Colonic mucosa (tissue), 4 donors: ENCODE measurements at regions of chr18 and their contacts with region 1.

Region 1: DNA sequence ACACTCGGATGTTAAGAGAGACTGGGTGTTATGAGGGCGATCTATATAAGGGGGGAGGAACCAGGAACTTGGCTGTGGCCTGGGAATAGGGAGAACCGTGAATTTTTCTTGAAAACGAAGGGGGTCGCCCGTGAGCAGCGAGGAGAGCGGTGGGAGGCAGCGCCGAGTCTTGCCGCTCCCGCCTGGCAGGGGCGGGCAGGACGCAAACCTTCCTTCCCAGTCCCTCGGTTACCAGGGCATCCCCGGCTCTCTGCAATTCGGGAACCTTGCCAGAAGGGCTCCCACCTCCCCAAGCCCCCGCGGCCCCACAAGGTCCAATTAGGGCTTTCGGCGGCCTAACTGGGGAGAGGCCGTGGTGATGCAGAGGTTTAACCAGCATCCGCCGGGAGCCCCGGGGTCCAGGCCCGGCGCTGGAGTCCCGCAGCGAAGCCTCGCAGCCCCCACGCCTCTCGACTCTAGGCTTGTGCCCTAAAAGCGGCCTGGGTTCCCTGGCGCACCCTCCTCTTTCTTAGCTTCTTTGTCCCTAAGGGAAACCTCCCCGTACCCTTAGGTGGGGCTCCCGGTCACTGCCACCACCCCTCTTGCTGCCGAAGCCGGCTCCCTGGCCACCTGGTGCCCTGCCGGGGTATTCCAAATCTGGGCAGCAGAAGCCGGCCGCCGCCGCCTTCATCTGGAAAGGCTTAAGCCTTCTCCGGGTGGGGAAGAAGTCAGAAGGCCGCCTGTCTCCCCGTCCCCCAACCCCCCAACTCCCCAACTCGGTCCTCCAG is 680 bp upstream of the FHOD3 start:
- DNase-seq: peak; percentile 67
- H3K4me3 ChIP-seq: peak overlapping the region; percentile 62
- H3K27ac ChIP-seq: no peak overlapping the region
- H3K4me1 ChIP-seq: peaks cover 16% of the 10 kb centered on the region
- H3K27me3 ChIP-seq: peaks cover 28% of the 10 kb centered on the region
- CTCF ChIP-seq: no peak

Region 2: GRCh38 chr18:36086186-36086585 is 210.6 kb before region 1 on chr18:
- intact Hi-C with region 1: no loop called
- DNase-seq: no peak
- H3K4me3 ChIP-seq: no peak overlapping the region
- H3K27ac ChIP-seq: no peak overlapping the region
- H3K4me1 ChIP-seq: no peaks in the 10 kb centered on the region
- H3K27me3 ChIP-seq: no peaks in the 10 kb centered on the region
- CTCF ChIP-seq: no peak

Region 3: DNA sequence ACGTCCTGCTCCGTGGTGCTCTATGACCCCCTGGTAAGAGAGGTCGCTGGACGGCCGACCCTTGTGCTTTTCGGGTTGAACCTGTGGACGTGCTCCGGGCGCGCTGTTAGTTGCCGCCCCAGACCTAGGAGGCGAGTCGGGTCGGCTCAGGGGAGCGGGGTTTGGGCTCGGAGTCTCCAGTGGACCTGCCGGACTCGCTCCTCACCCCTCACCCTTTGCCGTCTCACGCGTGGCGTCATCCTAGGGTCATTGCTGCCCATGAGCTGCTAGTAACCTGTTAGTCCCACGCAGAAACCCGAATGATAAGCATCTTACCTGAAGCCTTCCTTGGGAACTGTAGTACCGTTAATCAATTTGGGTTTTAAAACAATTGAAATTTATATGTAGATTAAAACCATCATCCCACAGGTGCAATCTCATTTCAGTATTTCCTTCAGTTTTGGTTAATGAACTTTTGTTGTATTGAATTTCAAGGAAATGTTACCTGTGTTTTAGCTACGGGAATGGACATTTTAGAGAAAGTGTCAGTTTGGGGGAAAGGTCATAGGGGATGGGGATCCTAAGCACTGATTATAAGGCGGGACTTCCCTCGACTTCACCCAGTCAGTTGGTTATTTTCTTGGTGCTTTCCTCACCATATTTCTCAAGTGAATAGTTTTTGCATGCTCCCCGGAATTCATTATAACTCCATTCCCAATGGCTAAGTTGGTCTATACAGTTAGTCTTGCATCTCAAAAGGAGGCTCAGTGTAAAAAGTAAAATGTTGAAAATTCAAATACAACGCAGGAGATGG is 166.6 kb before region 1 on chr18:
- intact Hi-C with region 1: no loop called
- DNase-seq: no peak
- H3K4me3 ChIP-seq: peak overlapping the region; percentile 91
- H3K27ac ChIP-seq: peak overlapping the region; percentile 96
- H3K4me1 ChIP-seq: peaks cover 7% of the 10 kb centered on the region
- H3K27me3 ChIP-seq: no peaks in the 10 kb centered on the region
- CTCF ChIP-seq: no peak

Region 4: GRCh38 chr18:36169938-36170337 is 126.9 kb before region 1 on chr18:
- intact Hi-C with region 1: no loop called
- DNase-seq: no peak
- H3K4me3 ChIP-seq: no peak overlapping the region
- H3K27ac ChIP-seq: no peak overlapping the region
- H3K4me1 ChIP-seq: no peaks in the 10 kb centered on the region
- H3K27me3 ChIP-seq: no peaks in the 10 kb centered on the region
- CTCF ChIP-seq: no peak

Region 5: GRCh38 chr18:36419905-36420531 is 123.2 kb after region 1 on chr18:
- intact Hi-C with region 1: loop called (anchors 10 kb)
- DNase-seq: no peak
- H3K4me3 ChIP-seq: no peak overlapping the region
- H3K27ac ChIP-seq: no peak overlapping the region
- H3K4me1 ChIP-seq: no peaks in the 10 kb centered on the region
- H3K27me3 ChIP-seq: no peaks in the 10 kb centered on the region
- CTCF ChIP-seq: no peak

Region 6: DNA sequence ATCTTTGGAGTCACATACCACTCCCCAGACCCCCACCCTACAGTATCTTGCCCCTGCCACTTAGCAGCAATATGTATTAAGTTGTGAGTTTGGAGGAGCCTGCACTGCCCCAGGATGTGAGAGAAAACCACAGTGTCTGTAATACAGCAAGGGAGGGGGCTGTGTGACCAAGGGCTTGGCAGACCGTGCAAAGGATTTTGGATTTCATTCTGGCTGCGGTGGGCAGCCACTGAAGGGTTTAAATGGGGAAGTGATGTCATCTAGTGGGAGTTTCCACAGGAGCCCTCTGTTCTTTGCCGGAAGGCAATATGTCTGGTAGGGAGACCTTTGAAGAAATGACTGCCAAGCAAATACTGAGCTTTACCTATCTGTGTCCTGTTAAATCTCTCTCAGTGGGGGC is 203.1 kb after region 1 on chr18:
- intact Hi-C with region 1: no loop called
- DNase-seq: no peak
- H3K4me3 ChIP-seq: no peak overlapping the region
- H3K27ac ChIP-seq: no peak overlapping the region
- H3K4me1 ChIP-seq: no peaks in the 10 kb centered on the region
- H3K27me3 ChIP-seq: no peaks in the 10 kb centered on the region
- CTCF ChIP-seq: no peak

Region 7: DNA sequence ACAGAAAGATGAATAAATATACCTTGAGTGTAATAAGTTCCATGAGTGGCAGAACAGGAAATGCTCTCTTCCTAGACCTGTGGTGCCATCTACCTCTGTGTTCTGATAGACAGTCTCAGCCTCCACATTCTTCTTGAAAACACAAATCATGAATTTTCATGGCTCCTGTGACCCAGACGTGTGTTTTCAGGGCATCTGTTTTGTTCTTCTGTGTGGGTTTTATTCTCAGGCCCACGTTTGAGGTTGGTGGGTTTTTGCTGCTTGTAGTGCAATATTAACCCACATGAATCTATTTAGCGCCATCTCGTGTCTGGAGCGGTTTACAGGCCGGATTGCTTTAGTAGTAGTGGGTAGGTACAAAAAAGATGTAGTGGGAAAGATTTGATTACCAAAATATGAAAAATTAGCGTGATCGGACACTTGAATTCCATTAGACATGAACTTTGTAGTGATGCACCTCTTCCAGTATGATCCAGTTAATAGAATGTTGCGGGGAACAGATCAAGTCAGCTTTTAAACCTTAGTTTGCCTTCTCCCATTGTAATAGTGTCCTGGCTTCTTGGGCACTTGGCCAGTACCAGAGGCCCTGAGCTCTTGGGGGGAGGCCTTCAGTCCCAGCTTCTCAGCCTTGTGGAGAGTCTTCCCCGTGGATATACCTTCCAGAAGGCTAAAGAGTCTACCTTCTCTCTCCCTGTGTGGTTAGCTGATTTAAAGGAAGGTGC is 275.5 kb after region 1 on chr18:
- intact Hi-C with region 1: loop called (anchors 10 kb)
- DNase-seq: peak; percentile 63
- H3K4me3 ChIP-seq: no peak overlapping the region
- H3K27ac ChIP-seq: no peak overlapping the region
- H3K4me1 ChIP-seq: no peaks in the 10 kb centered on the region
- H3K27me3 ChIP-seq: no peaks in the 10 kb centered on the region
- CTCF ChIP-seq: no peak